ENCODE measurements at regions of chr7 and their contacts with region 1.

Region 1: DNA sequence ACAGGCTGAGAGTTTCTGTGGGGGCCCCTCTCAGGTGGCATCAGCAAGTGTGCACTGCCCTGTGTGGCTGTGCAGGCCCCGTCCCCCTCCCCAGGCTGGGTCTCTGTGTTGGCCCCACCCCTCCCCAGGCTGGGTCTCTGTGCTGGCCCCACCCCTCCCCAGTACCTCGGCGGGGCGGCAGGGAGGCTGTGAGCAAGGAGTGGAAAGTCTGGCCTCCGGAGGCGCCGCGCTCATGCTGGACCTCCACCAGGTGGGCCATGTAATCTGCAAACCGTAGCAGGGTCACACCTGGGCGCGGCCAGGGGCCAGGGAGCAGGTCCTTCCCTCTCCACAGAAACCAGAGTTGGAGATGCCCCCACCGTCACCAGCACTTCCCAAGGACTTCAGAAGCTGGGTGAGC is 21.4 kb upstream of the MICALL2 start:
- DNase-seq: no peak

Region 2: GRCh38 chr7:1432411-1433082 is 48.1 kb before region 1 on chr7:
- intact Hi-C with region 1: loop called (anchors 5 kb)
- DNase-seq: peak; percentile 35 to 91 (median 74)